ENCODE measurements at regions of chr17 and their contacts with region 1.

Region 1: GRCh38 chr17:74923533-74924249 is 382 bp upstream of the OTOP2 start:
- DNase-seq: no peak
- ATAC-seq: peak; percentile 78
- H3K4me3 ChIP-seq: peak overlapping the region; percentile 27 to 50
- H3K27ac ChIP-seq: no peak overlapping the region
- H3K4me1 ChIP-seq: peaks cover 4% of the 10 kb centered on the region; the same call in 1 of the 2 replicates
- H3K27me3 ChIP-seq: peaks cover 18% of the 10 kb centered on the region
- CTCF ChIP-seq: peak; percentile 99

Region 2: GRCh38 chr17:74954665-74955421 is 31.2 kb after region 1 on chr17:
- CTCF ChIA-PET with region 1: interaction called, 41 read pairs
- POLR2A ChIA-PET with region 1: no interaction called
- in situ Hi-C with region 1: no loop called
- intact Hi-C with region 1: loop called (anchors 1 kb)
- DNase-seq: no peak
- ATAC-seq: no peak
- H3K4me3 ChIP-seq: no peak overlapping the region
- H3K27ac ChIP-seq: no peak overlapping the region
- H3K4me1 ChIP-seq: no peaks in the 10 kb centered on the region
- H3K27me3 ChIP-seq: no peaks in the 10 kb centered on the region
- CTCF ChIP-seq: no peak

Region 3: GRCh38 chr17:74994476-74994875 is 70.8 kb after region 1 on chr17:
- CTCF ChIA-PET with region 1: no interaction called
- POLR2A ChIA-PET with region 1: no interaction called
- in situ Hi-C with region 1: no loop called
- intact Hi-C with region 1: no loop called
- DNase-seq: no peak
- ATAC-seq: no peak
- H3K4me3 ChIP-seq: no peak overlapping the region
- H3K27ac ChIP-seq: no peak overlapping the region
- H3K4me1 ChIP-seq: peaks cover 7% of the 10 kb centered on the region
- H3K27me3 ChIP-seq: no peaks in the 10 kb centered on the region
- CTCF ChIP-seq: no peak

Region 4: GRCh38 chr17:75013092-75013559 is 89.4 kb after region 1 on chr17:
- CTCF ChIA-PET with region 1: no interaction called
- POLR2A ChIA-PET with region 1: no interaction called
- in situ Hi-C with region 1: no loop called
- intact Hi-C with region 1: no loop called
- DNase-seq: no peak
- ATAC-seq: no peak
- H3K4me3 ChIP-seq: peak overlapping the region; percentile 78 to 82
- H3K27ac ChIP-seq: peak overlapping the region; percentile 78
- H3K4me1 ChIP-seq: peaks cover 21% of the 10 kb centered on the region
- H3K27me3 ChIP-seq: no peaks in the 10 kb centered on the region
- CTCF ChIP-seq: no peak